ENCODE measurements at regions of chr2 and their contacts with region 1.

Region 1: DNA sequence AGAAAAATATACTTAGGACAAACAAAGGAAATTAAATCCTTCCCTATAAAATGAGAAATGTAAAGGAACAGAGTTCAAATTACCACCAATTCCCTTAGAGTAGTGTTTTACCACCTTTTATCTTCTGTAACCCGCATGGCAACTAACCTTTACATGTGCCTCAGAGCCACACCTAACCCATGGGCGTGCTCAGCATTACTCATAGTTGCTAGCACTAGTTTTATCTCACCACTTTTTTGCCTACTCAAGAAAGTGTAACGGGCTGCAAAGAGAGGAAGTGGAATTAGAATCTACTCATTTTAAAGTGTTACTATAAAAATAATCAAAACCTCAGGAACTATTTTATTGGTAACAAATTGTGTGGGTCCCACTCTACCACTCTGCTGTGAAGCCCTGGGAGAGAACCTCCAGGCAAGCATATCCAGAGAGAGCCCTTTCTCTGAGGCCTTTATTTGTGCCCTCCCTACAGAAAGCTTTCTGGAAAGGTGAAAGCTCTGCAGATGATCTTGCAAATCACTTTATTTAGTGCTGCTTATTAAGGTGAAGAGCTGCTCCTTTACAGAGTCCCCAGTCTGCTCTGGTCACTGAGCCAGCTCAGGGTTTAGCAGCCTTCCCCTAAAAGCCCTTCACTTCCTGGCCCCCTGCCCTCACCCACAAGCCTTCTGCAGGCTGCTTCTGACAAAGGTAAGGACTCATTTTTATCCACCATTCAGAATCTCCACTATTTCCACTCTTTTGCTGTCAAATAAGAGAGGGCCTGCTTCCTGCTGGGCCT is 98.8 kb downstream of the TRABD2A start:
- DNase-seq: peak; percentile 75
- H3K4me3 Mint-ChIP-seq: no peak overlapping the region
- H3K27ac Mint-ChIP-seq: peak overlapping the region; percentile 80
- H3K4me1 Mint-ChIP-seq: peaks cover 72% of the 10 kb centered on the region
- H3K27me3 Mint-ChIP-seq: no peaks in the 10 kb centered on the region

Region 2: DNA sequence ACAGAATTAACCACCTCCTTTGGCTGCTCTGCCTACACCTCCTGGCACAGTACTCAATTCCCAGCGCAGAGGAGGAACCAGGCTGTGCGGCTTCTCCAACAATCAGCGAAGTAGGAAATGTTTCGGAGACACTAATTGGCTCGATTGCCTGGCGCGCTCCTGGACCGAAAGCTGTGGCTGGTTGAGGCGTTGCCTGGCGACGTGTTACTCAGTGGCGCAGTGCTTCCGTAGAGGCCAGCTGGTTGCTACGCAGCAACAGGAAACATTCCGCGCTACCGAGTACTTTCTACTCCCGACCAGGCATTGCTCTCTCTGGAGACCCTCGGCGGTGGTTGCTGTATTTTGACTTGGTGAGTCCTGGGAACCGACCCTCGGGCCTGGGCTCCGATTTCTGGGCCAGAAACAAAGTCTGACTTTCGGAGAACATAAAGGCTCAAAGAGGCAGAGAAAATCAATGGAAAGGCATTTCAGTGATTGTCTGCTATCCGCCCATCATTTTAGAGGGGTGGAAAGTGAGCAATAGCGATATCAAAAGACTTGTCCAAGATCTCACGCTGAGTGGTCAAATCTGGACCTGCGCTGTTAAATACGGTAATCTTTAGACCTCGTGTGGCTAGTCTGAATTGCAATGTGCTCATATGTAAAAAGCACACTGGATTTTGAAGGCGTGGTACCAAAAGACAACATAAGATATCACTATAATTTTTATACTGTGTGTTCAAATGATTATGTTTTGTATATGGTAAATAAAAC is 265.7 kb before region 1 on chr2 and contains the start of gene DNAH6:
- CTCF ChIA-PET with region 1: no interaction called
- POLR2A ChIA-PET with region 1: no interaction called
- intact Hi-C with region 1: no loop called
- DNase-seq: peak; percentile 92
- H3K4me3 Mint-ChIP-seq: peak within 1 kb of the TSS; percentile 84
- H3K27ac Mint-ChIP-seq: no peak within 1 kb of the TSS
- H3K4me1 Mint-ChIP-seq: peaks cover 23% of the 10 kb centered on the region
- H3K27me3 Mint-ChIP-seq: no peaks in the 10 kb centered on the region
- total RNA-seq, gene DNAH6: 0.33 to 0.85 TPM

Region 3: GRCh38 chr2:84741296-84741765 is 40.8 kb before region 1 on chr2:
- CTCF ChIA-PET with region 1: interaction called, 5 read pairs
- POLR2A ChIA-PET with region 1: no interaction called
- intact Hi-C with region 1: loop called (anchors 1 kb)
- DNase-seq: peak; percentile 75
- H3K4me3 Mint-ChIP-seq: no peak overlapping the region
- H3K27ac Mint-ChIP-seq: no peak overlapping the region
- H3K4me1 Mint-ChIP-seq: peaks cover 10% of the 10 kb centered on the region
- H3K27me3 Mint-ChIP-seq: no peaks in the 10 kb centered on the region

Region 4: GRCh38 chr2:84800194-84800805 is 18.2 kb after region 1 on chr2:
- CTCF ChIA-PET with region 1: no interaction called
- POLR2A ChIA-PET with region 1: no interaction called
- intact Hi-C with region 1: loop called (anchors 1 kb)
- DNase-seq: no peak
- H3K4me3 Mint-ChIP-seq: no peak overlapping the region
- H3K27ac Mint-ChIP-seq: no peak overlapping the region
- H3K4me1 Mint-ChIP-seq: peaks cover 14% of the 10 kb centered on the region
- H3K27me3 Mint-ChIP-seq: no peaks in the 10 kb centered on the region

Region 5: DNA sequence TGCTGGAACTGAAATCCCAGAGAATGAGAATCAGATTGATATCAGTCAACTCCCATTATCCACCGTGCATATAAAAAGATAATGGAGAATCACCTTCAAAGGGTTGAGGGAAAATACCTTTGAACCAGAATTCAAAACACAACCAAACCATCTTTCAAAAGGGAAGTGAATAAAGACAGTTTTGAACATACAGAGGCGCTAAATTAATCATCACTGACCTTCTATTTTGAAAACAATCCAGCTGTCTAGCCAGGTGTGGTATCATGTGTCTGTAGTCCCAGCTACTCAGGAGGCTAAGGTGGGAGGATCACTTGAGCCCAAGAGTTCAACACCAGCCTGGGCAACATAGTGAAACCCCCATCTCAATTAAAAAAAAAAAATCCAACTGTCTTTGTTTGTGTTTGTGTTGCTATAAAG is 35.1 kb after region 1 on chr2:
- CTCF ChIA-PET with region 1: no interaction called
- POLR2A ChIA-PET with region 1: no interaction called
- intact Hi-C with region 1: loop called (anchors 1 kb)
- DNase-seq: peak; percentile 39
- H3K4me3 Mint-ChIP-seq: no peak overlapping the region
- H3K27ac Mint-ChIP-seq: no peak overlapping the region
- H3K4me1 Mint-ChIP-seq: peaks cover 31% of the 10 kb centered on the region
- H3K27me3 Mint-ChIP-seq: no peaks in the 10 kb centered on the region